ENCODE measurements at regions of chr3 and their contacts with region 1.

Region 1: DNA sequence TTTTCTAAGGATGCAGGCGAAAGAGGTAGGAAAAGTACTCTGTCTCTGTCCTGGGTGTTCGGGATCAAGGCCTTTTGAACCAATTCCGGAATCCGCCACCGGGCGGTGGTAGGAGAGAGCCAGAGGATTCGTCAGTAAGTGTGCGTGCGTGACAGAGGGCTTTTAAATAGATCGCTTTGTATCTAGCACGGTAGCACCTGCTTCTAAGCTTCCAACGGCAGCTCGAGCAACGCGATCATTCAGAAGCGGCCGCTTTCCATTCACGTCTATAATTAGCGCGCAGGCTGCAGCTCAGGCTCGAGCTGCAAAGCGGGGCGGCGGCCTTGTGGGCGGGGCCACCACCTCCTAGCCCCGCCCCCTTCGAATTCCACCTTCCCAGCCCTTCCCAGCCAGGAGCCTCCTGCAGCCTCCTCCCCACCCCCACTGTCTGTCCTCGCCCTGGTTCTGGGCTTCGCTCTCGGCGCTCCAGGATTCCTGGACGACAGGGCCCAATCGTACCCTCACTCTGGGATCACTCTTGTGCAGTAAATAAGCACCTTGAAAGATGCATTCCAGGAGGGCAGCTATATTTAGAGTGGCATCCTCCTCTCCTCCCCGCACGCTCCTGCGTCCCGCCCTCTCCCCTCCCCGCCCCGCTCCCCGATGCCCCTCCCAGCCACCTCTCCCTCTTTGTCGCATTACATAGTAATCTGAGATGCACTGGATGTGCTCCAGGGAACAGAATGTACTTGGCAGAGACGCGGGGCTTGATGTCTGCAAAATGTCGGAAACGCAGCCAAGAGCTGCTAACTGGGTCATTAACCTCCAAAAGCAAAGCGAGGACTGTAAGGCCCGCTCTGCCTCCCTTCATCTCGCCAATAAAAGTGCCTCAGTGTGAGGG is 224.1 kb upstream of the TPRG1 start:
- DNase-seq: peak; percentile 99
- H3K4me3 ChIP-seq: peak overlapping the region; percentile 12 to 46 (median 42)
- H3K27ac ChIP-seq: peak overlapping the region; percentile 92 to 97 (median 96)
- H3K4me1 ChIP-seq: peaks cover 0 to 63% (median 50%) of the 10 kb centered on the region in 4 donors
- H3K27me3 ChIP-seq: no peaks in the 10 kb centered on the region
- CTCF ChIP-seq: peak; percentile 24 to 64 (median 30)
- EP300 ChIP-seq: peak; percentile 100
- POLR2A ChIP-seq: peak; percentile 28 to 32

Region 2: GRCh38 chr3:188154014-188154808 is 793.4 kb before region 1 on chr3 and contains the start of gene LPP:
- intact Hi-C with region 1: loop called (anchors 2 kb)
- DNase-seq: peak; percentile 92
- H3K4me3 ChIP-seq: peak within 1 kb of the TSS; percentile 68 to 93 (median 84)
- H3K27ac ChIP-seq: peak within 1 kb of the TSS; percentile 95 to 99 (median 98)
- H3K4me1 ChIP-seq: peaks cover 0 to 57% (median 47%) of the 10 kb centered on the region in 4 donors
- H3K27me3 ChIP-seq: no peaks in the 10 kb centered on the region
- CTCF ChIP-seq: no peak
- EP300 ChIP-seq: peak in 3 of 4 donors; percentile 2 to 64 (median 14)
- POLR2A ChIP-seq: no peak
- total RNA-seq, gene LPP: 824 to 1,773 (median 1,187) TPM

Region 3: GRCh38 chr3:188264226-188265213 is 683.1 kb before region 1 on chr3:
- intact Hi-C with region 1: loop called (anchors 1 kb)
- DNase-seq: peak; percentile 85
- H3K4me3 ChIP-seq: no peak overlapping the region
- H3K27ac ChIP-seq: peak overlapping the region; percentile 88 to 94 (median 90)
- H3K4me1 ChIP-seq: peaks cover 0 to 98% (median 97%) of the 10 kb centered on the region in 4 donors
- H3K27me3 ChIP-seq: no peaks in the 10 kb centered on the region
- CTCF ChIP-seq: no peak
- EP300 ChIP-seq: peak in 2 of 4 donors; percentile 14 to 33
- POLR2A ChIP-seq: no peak

Region 4: GRCh38 chr3:188712248-188712924 is 235.3 kb before region 1 on chr3:
- intact Hi-C with region 1: loop called (anchors 5 kb)
- DNase-seq: no peak
- H3K4me3 ChIP-seq: no peak overlapping the region
- H3K27ac ChIP-seq: peak overlapping the region; percentile 19 to 82 (median 60)
- H3K4me1 ChIP-seq: peaks cover 0 to 53% (median 36%) of the 10 kb centered on the region in 4 donors
- H3K27me3 ChIP-seq: no peaks in the 10 kb centered on the region
- CTCF ChIP-seq: no peak
- EP300 ChIP-seq: peak in 3 of 4 donors; percentile 43 to 88 (median 86)
- POLR2A ChIP-seq: no peak

Measured in sigmoid colon (tissue), 7 donors.